CD14-positive monocyte (primary cell): ENCODE measurements at regions of chr21 and their contacts with region 1.

Region 1: DNA sequence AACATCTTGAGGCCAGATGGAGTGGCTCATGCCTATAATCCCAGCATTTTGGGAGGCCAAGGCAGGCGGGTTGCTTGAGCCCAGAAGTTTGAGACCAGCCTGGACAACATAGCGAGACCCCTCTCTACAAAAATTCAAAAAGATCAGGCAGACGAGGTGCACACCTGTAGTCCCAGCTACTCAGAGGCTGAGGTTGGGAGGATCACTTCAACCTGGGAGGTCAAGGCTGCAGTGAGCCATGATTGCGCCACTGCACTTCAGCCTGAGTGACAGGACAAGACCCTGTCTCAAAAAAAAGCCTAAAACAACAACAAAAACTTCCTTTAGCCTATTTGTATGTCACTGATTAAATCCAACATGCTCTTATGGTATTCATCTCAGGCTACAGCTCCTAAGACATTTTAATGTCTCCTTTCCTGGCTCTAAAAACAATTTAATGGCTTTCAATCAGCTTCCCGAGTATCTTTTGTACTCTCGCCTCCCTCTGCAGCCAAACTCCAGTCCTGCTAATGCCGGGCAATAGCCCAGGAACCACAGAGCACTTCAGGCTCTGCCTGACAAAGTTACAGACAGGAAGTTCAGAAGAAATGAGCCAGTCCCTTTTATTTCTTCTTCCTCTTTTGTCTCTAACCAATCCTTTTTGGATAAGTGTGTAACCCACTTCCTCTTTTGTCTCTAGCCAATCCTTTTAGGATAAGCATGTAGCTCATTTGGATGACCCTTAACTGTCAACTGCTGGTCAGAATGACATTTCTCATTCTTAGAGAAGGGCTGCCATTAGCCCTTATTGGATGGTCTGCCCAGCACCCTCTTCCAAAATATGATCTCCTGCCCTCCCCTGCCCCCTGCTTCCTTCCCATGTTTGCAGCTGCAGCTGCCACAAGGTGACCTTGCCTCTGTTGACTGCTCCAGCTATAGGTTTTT is 6.6 kb upstream of the DOP1B start:
- DNase-seq: peak; percentile 81 to 97 (median 89)
- H3K4me3 ChIP-seq: peak overlapping the region in 2 of 3 experiments; percentile 7 to 54
- H3K4me3 Mint-ChIP-seq: peak overlapping the region; percentile 22 to 90
- H3K27ac ChIP-seq: peak overlapping the region; percentile 83 to 89
- H3K27ac Mint-ChIP-seq: peak overlapping the region; percentile 92 to 98 (median 96)
- H3K4me1 ChIP-seq: peaks cover 26 to 28% of the 10 kb centered on the region in 2 donors
- H3K4me1 Mint-ChIP-seq: peaks cover 32% of the 10 kb centered on the region
- H3K27me3 ChIP-seq: no peaks in the 10 kb centered on the region
- H3K27me3 Mint-ChIP-seq: no peaks in the 10 kb centered on the region
- CTCF ChIP-seq: no peak

Region 2: DNA sequence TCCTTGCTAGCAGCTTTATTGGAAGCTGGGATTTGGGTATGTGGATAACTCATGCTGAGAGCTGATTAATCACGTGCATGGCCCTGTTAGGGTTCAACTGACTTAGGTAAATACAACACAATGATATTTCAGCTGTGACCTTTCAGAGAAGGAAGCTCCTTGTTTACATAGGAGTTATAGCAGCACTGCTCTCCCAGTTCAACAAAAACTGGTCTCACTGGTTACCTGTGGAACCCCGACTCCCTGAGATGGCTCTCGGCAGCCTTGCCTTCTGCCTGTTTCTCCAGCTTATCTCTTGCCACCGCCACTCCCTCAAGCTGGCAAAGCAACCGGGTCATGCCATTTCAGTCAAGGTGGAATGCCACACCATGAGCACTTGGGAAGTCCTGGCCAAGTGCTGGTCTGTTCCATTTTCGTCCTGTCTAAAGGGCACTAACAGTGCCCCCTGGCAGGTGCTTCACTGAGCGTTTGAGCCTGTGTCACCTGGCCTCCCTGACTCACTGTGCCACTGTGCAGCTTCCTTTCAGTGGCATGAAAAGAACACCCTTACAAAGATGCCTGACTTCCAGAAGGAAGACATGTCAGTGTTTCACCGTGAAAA is 38.1 kb after region 1 on chr21:
- intact Hi-C with region 1: loop called in 1 of 2 experiments (anchors 5 kb)
- DNase-seq: no peak
- H3K4me3 ChIP-seq: no peak overlapping the region
- H3K4me3 Mint-ChIP-seq: no peak overlapping the region
- H3K27ac ChIP-seq: peak overlapping the region in 1 of 2 donors; percentile 34
- H3K27ac Mint-ChIP-seq: peak overlapping the region in 6 of 7 donors; percentile 28 to 65 (median 58)
- H3K4me1 ChIP-seq: peaks cover 35 to 40% of the 10 kb centered on the region in 2 donors
- H3K4me1 Mint-ChIP-seq: peaks cover 37% of the 10 kb centered on the region
- H3K27me3 ChIP-seq: no peaks in the 10 kb centered on the region
- H3K27me3 Mint-ChIP-seq: peaks cover 0 to 2% (median 0%) of the 10 kb centered on the region in 3 donors
- CTCF ChIP-seq: no peak